ENCODE measurements at regions of chr18 and their contacts with region 1.

Region 1: DNA sequence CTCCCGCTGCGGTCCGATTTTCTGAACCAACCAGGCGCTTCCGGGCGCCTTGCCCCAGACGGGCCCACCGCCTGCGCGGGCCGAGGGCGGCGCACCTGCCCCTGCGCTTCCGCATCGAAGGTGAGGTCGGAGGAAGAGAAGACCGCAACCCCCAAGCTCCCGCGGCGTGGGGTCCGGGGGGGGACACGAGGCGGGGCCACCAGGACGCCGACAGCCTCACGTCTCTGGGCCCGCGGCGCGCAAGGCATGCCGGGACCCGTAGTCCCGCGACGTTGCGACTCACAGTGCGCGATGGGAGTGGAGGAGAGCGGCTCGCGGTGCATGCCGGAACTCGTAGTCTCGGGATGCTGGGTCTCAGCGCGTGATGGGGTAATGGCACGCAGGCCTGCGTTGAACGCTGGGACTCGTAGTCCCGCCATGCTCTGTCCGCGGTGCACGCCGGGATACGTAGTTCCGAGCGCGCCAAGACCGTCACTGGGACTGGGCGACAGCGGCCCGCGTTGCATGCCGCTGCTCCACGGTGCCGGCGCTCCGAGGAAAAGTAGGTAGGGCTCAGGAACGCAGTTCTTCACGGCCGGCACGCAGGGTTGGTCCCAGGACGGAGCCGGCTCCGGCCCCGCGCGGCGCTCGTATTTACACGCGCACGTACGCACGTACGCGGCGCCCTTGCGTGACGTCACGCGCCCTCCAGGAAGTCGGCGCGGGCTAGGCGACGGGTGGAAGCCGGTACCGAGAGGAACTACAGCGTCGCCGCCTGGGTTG is at the start of gene CTDP1:
- DNase-seq: peak; percentile 97
- H3K4me3 Mint-ChIP-seq: peak within 1 kb of the TSS; percentile 94
- H3K27ac Mint-ChIP-seq: peak within 1 kb of the TSS; percentile 99
- H3K4me1 Mint-ChIP-seq: peaks cover 59% of the 10 kb centered on the region
- H3K27me3 Mint-ChIP-seq: no peaks in the 10 kb centered on the region
- total RNA-seq, gene CTDP1: 45.9 and 47.2 TPM in 2 replicates

Region 2: DNA sequence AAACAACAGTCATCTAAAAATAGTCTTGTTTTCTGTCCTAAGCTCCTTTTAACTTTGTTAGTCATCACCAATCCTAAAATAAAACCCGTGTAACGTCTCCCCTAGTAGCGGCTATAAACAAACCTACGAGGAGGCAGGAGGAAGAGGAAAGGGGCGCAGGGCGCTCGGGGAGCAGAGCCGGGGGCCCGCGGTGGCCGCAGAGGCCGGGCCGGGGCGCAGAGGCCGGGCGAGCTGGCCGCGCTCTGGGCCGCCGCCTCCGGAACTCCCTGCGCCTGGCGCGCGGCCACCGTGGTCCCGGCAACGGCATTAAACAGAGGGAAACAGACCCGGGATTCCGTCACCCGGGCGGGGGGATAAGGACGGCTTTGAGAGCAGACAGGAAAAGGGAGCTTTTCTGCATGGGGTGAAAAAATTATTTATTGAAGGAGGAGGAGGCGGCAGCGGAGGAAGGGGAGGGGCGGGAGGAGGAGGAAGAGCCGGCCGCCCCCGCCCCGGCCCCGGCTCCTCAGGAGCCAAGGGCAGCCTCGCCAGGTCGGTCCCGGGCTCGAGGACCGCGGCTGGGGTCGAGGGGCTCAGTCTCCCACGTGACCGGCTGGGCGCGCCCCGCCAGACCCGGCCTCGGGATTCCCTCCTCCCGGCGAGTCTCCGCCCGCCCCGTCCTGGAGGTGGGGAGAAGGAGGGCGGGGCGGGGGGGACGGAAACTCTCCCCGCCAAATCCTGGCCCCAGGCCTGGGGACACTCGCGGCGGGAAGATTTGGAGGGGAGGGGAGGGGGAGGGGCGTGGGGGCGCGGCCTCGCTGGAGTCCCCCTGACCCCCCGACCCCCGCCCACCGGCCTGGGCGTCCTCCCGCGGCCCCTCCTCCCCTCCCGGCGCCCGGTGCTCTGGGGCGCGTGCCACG is 285.4 kb before region 1 on chr18:
- intact Hi-C with region 1: loop called (anchors 1 kb)
- DNase-seq: peak; percentile 31
- H3K4me3 Mint-ChIP-seq: peak overlapping the region; percentile 85
- H3K27ac Mint-ChIP-seq: peak overlapping the region; percentile 90
- H3K4me1 Mint-ChIP-seq: peaks cover 21% of the 10 kb centered on the region
- H3K27me3 Mint-ChIP-seq: peaks cover 24% of the 10 kb centered on the region

Region 3: DNA sequence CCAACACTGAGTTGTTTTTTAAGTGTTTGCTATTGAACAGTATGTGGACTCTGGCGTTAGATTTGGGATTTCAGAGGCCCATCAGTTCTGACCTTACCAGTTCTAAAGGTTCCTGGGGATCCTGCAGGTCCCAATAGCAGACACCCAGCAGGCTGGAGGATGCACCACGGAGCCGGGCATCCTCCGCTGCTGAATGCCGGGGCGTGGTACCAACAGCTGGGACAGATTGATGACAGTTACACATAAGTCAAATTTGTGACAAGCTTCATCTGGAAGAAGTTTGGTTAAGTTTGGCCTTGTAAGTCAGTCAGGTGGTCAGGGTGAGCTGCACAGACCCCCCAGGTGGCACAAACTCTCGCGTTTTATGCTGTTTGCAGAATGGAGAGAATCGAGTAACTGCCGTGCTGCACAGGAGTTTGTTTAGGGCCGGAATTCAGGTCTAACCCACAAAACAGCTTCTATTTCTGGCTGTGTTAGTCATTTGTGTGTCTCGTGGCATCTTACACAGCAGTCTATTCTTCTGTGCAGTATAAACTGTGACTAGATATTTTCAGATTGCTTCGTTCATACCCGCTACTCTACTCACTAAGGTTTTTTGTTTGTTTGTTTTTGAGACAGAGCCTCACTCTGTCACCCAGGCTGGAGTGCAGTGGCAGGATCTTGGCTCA is 19.5 kb after region 1 on chr18:
- intact Hi-C with region 1: no loop called
- DNase-seq: no peak
- H3K4me3 Mint-ChIP-seq: no peak overlapping the region
- H3K27ac Mint-ChIP-seq: no peak overlapping the region
- H3K4me1 Mint-ChIP-seq: peaks cover 6% of the 10 kb centered on the region
- H3K27me3 Mint-ChIP-seq: no peaks in the 10 kb centered on the region

Region 4: DNA sequence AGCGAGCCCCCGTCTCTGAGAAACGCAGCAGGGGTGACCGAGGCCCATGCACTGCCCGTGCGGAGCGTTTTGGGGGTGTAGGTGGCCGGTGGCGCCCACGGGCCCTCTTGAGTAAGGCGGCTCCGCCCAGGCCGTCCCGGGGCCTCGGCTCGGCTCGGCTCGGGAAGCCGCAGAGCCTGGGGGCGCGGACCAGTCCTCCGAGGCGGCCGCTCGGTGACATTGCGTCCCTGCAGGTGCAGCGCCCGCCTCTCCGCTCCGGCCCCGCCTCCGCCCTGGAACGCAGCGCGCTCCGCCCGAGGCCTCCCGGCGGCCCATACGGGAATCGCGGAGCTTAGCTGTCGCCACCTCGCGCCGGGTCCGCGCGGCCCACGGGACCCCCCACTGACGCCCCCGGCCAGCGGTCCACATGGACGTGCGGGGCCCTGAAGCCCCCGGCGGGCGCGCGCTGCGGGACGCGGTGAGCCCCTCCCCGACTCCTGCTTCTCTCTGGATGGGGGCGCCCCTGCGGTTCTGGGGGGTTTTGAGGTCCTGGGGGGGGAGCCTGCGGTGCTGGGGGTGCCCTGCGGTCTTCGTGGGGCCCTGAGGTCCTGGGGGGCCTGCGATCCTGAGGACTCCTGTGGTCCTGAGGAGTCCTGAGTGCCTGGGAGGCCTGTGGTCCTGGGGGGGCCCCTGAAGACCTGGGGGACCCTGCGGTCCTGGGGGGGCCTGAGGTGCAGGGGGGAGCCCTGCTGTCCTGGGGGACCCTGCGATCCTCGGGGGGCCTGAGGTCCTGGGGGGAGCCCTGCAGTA is 285.2 kb after region 1 on chr18 and contains the start of gene HSBP1L1:
- intact Hi-C with region 1: loop called (anchors 1 kb)
- DNase-seq: peak; percentile 66
- H3K4me3 Mint-ChIP-seq: peak within 1 kb of the TSS; percentile 84
- H3K27ac Mint-ChIP-seq: peak within 1 kb of the TSS; percentile 68
- H3K4me1 Mint-ChIP-seq: peaks cover 33% of the 10 kb centered on the region
- H3K27me3 Mint-ChIP-seq: no peaks in the 10 kb centered on the region
- total RNA-seq, gene HSBP1L1: 9.0 and 10.0 TPM in 2 replicates

Region 5: GRCh38 chr18:80034068-80034851 is 355.0 kb after region 1 on chr18 and contains the start of gene RBFA:
- intact Hi-C with region 1: loop called (anchors 1 kb)
- DNase-seq: peak; percentile 98
- H3K4me3 Mint-ChIP-seq: peak within 1 kb of the TSS; percentile 87
- H3K27ac Mint-ChIP-seq: peak within 1 kb of the TSS; percentile 88
- H3K4me1 Mint-ChIP-seq: peaks cover 25% of the 10 kb centered on the region
- H3K27me3 Mint-ChIP-seq: peaks cover 4% of the 10 kb centered on the region
- total RNA-seq, gene RBFA: 48.5 and 50.3 TPM in 2 replicates

Region 6: DNA sequence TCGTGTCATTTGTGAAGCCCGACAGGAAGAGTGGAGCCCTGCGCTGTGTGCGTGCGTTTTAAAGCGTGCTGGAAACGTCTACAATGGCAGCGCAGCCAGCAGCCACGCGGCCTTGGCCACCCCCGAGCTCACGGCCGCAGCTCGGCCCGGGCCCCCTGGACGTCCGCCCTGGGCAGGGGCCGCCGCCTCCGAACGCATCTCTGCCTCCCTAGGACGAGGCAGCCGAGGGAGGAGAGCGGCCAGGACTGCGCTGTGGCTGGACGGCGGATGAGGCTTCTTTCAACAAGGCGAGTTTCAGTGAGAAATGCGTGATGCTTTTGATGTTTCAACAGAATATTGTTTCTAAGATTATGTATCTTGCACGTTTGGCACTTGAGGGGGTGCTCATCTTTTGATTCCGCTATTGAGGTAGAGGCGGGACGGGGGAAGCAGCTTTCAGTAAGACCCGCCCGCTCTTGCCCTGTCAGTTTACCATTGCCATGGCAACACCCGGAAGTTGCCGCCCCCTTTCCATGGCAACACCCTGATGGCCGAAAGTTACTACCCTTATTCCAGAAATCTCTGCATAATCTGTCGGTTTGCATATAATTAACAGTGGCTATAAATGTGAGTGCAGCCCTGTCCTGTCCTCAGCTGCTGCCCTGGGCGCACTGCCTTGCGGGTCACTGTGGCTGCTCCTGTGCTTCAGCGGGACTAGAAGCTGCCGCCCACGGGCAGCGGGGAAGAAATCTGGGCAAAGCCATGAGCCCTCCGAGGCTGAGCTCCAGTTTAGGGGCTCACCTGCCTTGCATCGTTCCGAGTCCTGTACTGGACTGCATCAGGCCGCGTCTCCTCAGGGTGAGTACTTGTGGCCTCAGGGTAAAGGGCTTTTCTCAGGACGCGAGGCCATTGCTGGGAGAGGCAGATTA is 468.4 kb after region 1 on chr18:
- intact Hi-C with region 1: loop called (anchors 1 kb)
- DNase-seq: peak; percentile 70
- H3K4me3 Mint-ChIP-seq: peak overlapping the region; percentile 86
- H3K27ac Mint-ChIP-seq: peak overlapping the region; percentile 65
- H3K4me1 Mint-ChIP-seq: peaks cover 10% of the 10 kb centered on the region
- H3K27me3 Mint-ChIP-seq: peaks cover 3% of the 10 kb centered on the region

Measured in activated T-helper 1 cell treated with anti-CD3 and anti-CD28 coated beads, Interleukin-12 subunit alpha, Interleukin-12 subunit beta, Interleukin-2, Interleukin-4 antibody, amounts not matched to agents 30 ng/mL and 10 ng/mL and 1 ng/mL, durations not matched to agents 14 hours and 24 hours and 36 hours (primary cell).